CD4-positive, alpha-beta T cell (primary cell): ENCODE measurements at regions of chr2 and their contacts with region 1.

Region 1: DNA sequence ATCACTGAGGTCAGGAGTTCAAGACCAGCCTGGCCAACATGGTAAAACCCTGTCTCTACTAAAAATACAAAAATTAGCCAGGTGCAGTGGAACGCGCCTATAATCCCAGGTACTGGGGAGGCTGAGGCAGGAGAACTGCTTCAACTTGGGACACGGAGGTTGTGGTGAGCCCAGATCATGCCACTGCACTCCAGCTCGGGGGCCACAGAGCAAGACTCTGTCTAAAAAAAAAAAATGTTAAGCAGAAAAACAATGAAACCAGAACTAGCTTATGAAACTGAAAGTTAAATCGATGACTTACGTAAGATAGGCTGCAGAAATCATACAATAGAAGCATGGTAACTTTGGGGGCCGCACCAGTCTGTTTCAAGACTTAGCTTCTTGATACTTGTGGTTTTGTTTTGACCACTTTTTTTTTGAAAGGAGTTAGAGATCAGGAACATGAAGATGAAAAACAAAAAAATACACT is 6.2 kb upstream of the GPR155 start:
- DNase-seq: peak; percentile 28 to 89 (median 56)
- ATAC-seq: peak; percentile 83
- H3K4me3 ChIP-seq: peak overlapping the region; percentile 53
- H3K4me3 Mint-ChIP-seq: peak overlapping the region; percentile 90
- H3K27ac ChIP-seq: peak overlapping the region; percentile 85
- H3K27ac Mint-ChIP-seq: peak overlapping the region; percentile 95
- H3K4me1 ChIP-seq: peaks cover 54% of the 10 kb centered on the region
- H3K4me1 Mint-ChIP-seq: peaks cover 85% of the 10 kb centered on the region
- H3K27me3 ChIP-seq: no peaks in the 10 kb centered on the region
- H3K27me3 Mint-ChIP-seq: no peaks in the 10 kb centered on the region
- CTCF ChIP-seq: no peak

Region 2: GRCh38 chr2:174546581-174547506 is 53.8 kb after region 1 on chr2:
- CTCF ChIA-PET with region 1: no interaction called
- POLR2A ChIA-PET with region 1: interaction called, 13 read pairs
- intact Hi-C with region 1: no loop called
- DNase-seq: peak in 8 of 14 experiments; percentile 13 to 60 (median 24)
- ATAC-seq: peak; percentile 75
- H3K4me3 ChIP-seq: no peak overlapping the region
- H3K4me3 Mint-ChIP-seq: no peak overlapping the region
- H3K27ac ChIP-seq: no peak overlapping the region
- H3K27ac Mint-ChIP-seq: peak overlapping the region; percentile 69
- H3K4me1 ChIP-seq: peaks cover 2% of the 10 kb centered on the region
- H3K4me1 Mint-ChIP-seq: peaks cover 11% of the 10 kb centered on the region
- H3K27me3 ChIP-seq: no peaks in the 10 kb centered on the region
- H3K27me3 Mint-ChIP-seq: no peaks in the 10 kb centered on the region
- CTCF ChIP-seq: no peak

Region 3: GRCh38 chr2:174554529-174555150 is 61.6 kb after region 1 on chr2:
- CTCF ChIA-PET with region 1: no interaction called
- POLR2A ChIA-PET with region 1: interaction called, 16 read pairs
- intact Hi-C with region 1: loop called in 1 of 2 experiments (anchors 5 kb)
- DNase-seq: peak in 3 of 14 experiments; percentile 45 to 69 (median 68)
- ATAC-seq: peak; percentile 66
- H3K4me3 ChIP-seq: no peak overlapping the region
- H3K4me3 Mint-ChIP-seq: no peak overlapping the region
- H3K27ac ChIP-seq: peak overlapping the region; percentile 32 to 59
- H3K27ac Mint-ChIP-seq: peak overlapping the region; percentile 76
- H3K4me1 ChIP-seq: peaks cover 36% of the 10 kb centered on the region
- H3K4me1 Mint-ChIP-seq: peaks cover 43% of the 10 kb centered on the region
- H3K27me3 ChIP-seq: no peaks in the 10 kb centered on the region
- H3K27me3 Mint-ChIP-seq: no peaks in the 10 kb centered on the region
- CTCF ChIP-seq: no peak